SK-N-SH (cell line): ENCODE measurements at regions of chr5 and their contacts with region 1.

Region 1: GRCh38 chr5:151740336-151740942 is 18.0 kb downstream of the ATOX1 start:
- DNase-seq: peak; percentile 70
- H3K4me3 ChIP-seq: peak overlapping the region; percentile 9 to 51; a peak in 3 of 4 replicates
- H3K27ac ChIP-seq: peak overlapping the region; percentile 87 to 100
- H3K4me1 ChIP-seq: peaks cover 22 to 41% of the 10 kb centered on the region in 2 experiments; a peak in 3 of 4 replicates
- H3K27me3 ChIP-seq: no peaks in the 10 kb centered on the region
- CTCF ChIP-seq: peak; percentile 95
- EP300 ChIP-seq: peak; percentile 3 to 80; a peak in 1 of 4 replicates
- RAD21 ChIP-seq: peak; percentile 80

Region 2: GRCh38 chr5:151523335-151523734 is 217.1 kb before region 1 on chr5:
- CTCF ChIA-PET with region 1: interaction called, 12 read pairs
- POLR2A ChIA-PET with region 1: no interaction called
- DNase-seq: peak; percentile 72
- H3K4me3 ChIP-seq: no peak overlapping the region
- H3K27ac ChIP-seq: no peak overlapping the region
- H3K4me1 ChIP-seq: no peaks in the 10 kb centered on the region
- H3K27me3 ChIP-seq: peaks cover 10% of the 10 kb centered on the region; the same call in 1 of the 2 replicates
- CTCF ChIP-seq: peak; percentile 65
- EP300 ChIP-seq: no peak
- RAD21 ChIP-seq: peak; percentile 83

Region 3: GRCh38 chr5:151686674-151687407 is 53.6 kb before region 1 on chr5 and contains the start of gene SPARC:
- CTCF ChIA-PET with region 1: interaction called, 18 read pairs
- POLR2A ChIA-PET with region 1: interaction called, 4 read pairs
- DNase-seq: peak; percentile 72
- H3K4me3 ChIP-seq: peak within 1 kb of the TSS; percentile 68 to 83
- H3K27ac ChIP-seq: peak within 1 kb of the TSS; percentile 85 to 97
- H3K4me1 ChIP-seq: peaks cover 21 to 38% of the 10 kb centered on the region in 2 experiments
- H3K27me3 ChIP-seq: no peaks in the 10 kb centered on the region
- CTCF ChIP-seq: no peak
- EP300 ChIP-seq: no peak; a peak in 1 of 4 replicates
- RAD21 ChIP-seq: 0 out of 2 replicates have a peak, but pooled peaks have one; percentile 1
- polyA plus RNA-seq, gene SPARC: 987 and 1,115 TPM in 2 replicates

Region 4: DNA sequence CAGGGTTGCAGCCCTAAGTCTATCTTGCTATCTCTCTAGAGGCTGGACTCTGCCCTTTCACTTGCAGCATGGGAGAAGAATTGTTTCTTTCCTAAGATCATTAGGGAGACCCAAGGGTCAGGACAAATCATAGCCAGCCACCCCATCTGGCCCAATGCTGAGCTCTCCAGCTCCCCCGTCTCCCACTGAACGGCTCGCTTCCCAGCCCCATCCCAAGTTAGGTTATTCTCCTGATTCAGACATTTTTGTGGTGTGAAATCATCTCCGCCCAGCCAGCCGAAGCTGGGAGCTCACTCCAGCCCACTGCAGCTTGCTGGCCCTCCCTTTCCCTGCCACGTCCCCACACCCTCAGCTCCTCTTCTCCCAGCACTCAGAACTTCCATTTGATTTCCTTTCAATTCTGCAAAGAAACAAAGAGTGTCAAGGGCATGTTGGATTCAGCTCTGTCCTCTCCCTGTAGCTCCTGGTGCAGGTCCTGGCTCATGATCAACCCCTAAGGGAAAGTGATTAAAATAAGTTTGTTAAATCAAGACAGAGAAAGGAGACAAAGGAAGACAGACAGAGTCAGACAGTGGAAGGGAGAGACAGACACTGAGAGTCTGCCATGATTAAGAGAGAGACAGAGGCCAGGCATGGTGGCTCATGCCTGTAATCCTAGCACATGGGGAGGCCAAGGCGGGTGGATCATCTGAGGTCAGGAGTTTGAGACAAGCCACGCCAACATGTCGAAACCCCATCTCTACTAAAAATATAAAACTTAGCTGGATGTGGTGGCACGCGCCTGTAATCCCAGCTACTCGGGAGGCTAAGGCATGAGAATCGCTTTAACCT is 41.2 kb before region 1 on chr5:
- CTCF ChIA-PET with region 1: interaction called, 49 read pairs
- POLR2A ChIA-PET with region 1: interaction called, 4 read pairs
- DNase-seq: no peak
- H3K4me3 ChIP-seq: no peak overlapping the region
- H3K27ac ChIP-seq: peak overlapping the region; percentile 83 to 100
- H3K4me1 ChIP-seq: peaks cover 24 to 26% of the 10 kb centered on the region in 2 experiments
- H3K27me3 ChIP-seq: no peaks in the 10 kb centered on the region
- CTCF ChIP-seq: no peak
- EP300 ChIP-seq: peak in 1 of 2 experiments; percentile 83; a peak in 1 of 4 replicates
- RAD21 ChIP-seq: no peak

Region 5: DNA sequence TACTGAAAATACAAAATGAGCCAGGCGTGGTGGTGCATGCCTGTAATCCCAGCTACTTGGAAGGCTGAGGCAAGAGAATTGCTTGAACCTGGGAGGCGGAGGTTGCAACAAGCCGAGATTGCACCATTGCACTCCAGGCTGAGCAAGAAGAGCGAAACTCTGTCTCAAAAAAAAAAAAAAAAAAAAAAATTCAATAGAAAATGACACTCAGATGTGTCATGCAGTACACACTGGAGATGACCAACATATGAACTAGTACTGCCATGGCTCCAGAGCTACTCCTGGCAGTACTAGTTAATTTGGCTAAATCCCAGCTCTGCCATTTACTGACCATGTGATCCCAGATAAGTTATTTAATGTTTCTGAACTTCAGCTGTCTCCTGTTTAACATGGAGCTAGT is 10.7 kb after region 1 on chr5:
- CTCF ChIA-PET with region 1: interaction called, 88 read pairs
- POLR2A ChIA-PET with region 1: no interaction called
- DNase-seq: no peak
- H3K4me3 ChIP-seq: no peak overlapping the region
- H3K27ac ChIP-seq: no peak overlapping the region
- H3K4me1 ChIP-seq: no peaks in the 10 kb centered on the region
- H3K27me3 ChIP-seq: no peaks in the 10 kb centered on the region
- CTCF ChIP-seq: no peak
- EP300 ChIP-seq: no peak
- RAD21 ChIP-seq: no peak

Region 6: GRCh38 chr5:151764801-151765200 is 24.4 kb after region 1 on chr5:
- CTCF ChIA-PET with region 1: interaction called, 27 read pairs
- POLR2A ChIA-PET with region 1: no interaction called
- DNase-seq: no peak
- H3K4me3 ChIP-seq: no peak overlapping the region
- H3K27ac ChIP-seq: no peak overlapping the region
- H3K4me1 ChIP-seq: no peaks in the 10 kb centered on the region
- H3K27me3 ChIP-seq: no peaks in the 10 kb centered on the region
- CTCF ChIP-seq: no peak
- EP300 ChIP-seq: no peak
- RAD21 ChIP-seq: no peak